Heart left ventricle (tissue), 16 donors: ENCODE measurements at regions of chr4 and their contacts with region 1.

Region 1: GRCh38 chr4:183840311-183840710 is 64.8 kb upstream of the STOX2 start:
- DNase-seq: peak; percentile 81 to 84 (median 82)
- ATAC-seq: peak; percentile 27 to 84 (median 68)
- H3K4me3 ChIP-seq: no peak overlapping the region
- H3K27ac ChIP-seq: no peak overlapping the region
- H3K4me1 ChIP-seq: peaks cover 0 to 21% (median 5%) of the 10 kb centered on the region in 12 donors
- H3K27me3 ChIP-seq: no peaks in the 10 kb centered on the region
- CTCF ChIP-seq: peak; percentile 83 to 93 (median 88)
- POLR2A ChIP-seq: no peak

Region 2: DNA sequence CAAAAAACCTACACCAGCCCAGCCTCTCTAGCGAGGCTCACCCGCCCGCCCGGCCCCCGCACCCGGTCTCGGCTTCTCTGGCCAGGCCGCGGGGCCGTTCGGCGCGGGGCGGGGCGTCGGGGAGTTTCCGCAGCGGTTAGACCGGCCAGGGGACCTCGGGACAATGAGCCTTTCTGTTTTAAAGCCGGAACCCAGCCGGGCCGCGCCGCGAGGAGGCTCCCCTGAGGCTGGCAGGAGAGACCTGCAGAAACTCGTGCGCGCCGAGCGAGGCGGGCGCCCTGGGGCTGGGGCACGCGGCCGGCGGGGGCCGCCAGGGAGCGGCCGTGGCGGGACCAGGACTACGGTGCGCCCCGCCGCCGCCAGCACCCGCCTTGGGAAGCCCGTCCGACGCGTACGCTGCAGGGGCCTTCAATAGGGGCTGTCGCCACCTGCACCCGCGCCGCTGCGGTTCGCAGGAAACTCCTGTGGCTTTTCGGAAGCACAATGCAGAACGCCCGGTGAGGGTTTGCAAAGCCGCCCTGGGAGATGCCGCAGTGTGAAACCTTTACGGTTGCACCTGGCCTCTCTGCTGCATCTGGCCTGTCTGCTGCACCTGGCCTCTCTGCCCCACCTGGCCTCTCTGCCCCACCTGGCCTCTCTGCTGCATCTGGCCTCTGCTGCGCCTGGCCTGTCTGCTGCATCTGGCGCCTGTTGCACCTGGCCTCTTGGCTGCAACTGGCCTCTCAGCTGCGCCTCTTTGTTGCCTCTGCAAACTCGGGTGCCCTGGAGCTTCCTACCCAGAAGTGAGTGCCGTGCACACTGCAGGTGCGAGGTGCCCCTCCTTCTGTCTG is 117.4 kb before region 1 on chr4:
- intact Hi-C with region 1: loop called in 1 of 10 experiments (anchors 5 kb)
- DNase-seq: peak; percentile 61 to 86 (median 72)
- ATAC-seq: peak; percentile 24 to 78 (median 75)
- H3K4me3 ChIP-seq: peak overlapping the region; percentile 32 to 70 (median 58)
- H3K27ac ChIP-seq: peak overlapping the region in 11 of 12 donors; percentile 3 to 74 (median 44)
- H3K4me1 ChIP-seq: peaks cover 0 to 18% (median 1%) of the 10 kb centered on the region in 12 donors
- H3K27me3 ChIP-seq: no peaks in the 10 kb centered on the region
- CTCF ChIP-seq: peak in 4 of 12 donors; percentile 7 to 31 (median 13)
- POLR2A ChIP-seq: no peak

Region 3: DNA sequence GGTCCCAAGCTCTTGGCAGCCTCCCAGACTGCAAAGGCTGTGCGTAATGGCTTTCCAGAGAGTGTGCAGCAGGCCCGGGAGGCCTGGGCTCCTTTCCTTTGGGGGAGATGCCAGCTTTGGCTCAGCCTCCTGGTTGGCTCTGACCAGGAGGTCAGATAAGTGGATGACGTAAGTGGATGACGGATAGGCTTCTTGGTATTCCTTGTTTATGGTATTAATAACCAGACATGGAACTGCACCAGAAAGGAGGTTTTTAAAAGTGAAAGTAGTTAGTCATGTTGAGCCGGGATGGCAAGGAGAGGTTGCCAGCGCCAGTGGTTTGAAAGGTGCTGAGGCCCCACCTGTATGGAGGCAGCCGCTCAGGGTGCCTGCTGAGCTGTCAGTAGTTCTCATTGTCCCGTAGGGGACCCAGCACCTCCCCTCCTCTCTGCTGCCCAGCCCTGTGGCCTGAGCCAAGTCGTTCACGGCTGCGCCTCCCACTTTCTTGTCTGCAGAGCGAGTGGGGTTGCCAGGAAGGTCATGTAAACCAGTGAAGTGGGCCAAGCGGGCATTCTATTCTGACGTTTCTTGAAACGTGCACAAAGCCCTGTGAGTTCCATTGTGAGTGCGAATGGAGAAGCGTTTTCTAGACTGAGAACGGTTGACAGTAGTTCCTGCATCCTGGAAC is 36.1 kb after region 1 on chr4:
- intact Hi-C with region 1: loop called in 2 of 10 experiments (anchors 1 to 2 kb)
- DNase-seq: peak; percentile 86 to 96 (median 89)
- ATAC-seq: peak; percentile 94 to 96 (median 94)
- H3K4me3 ChIP-seq: peak overlapping the region in 11 of 12 donors; percentile 14 to 65 (median 47)
- H3K27ac ChIP-seq: peak overlapping the region; percentile 68 to 95 (median 85)
- H3K4me1 ChIP-seq: peaks cover 0 to 29% (median 13%) of the 10 kb centered on the region in 12 donors
- H3K27me3 ChIP-seq: no peaks in the 10 kb centered on the region
- CTCF ChIP-seq: no peak
- POLR2A ChIP-seq: peak in 1 of 2 donors; percentile 19

Region 4: DNA sequence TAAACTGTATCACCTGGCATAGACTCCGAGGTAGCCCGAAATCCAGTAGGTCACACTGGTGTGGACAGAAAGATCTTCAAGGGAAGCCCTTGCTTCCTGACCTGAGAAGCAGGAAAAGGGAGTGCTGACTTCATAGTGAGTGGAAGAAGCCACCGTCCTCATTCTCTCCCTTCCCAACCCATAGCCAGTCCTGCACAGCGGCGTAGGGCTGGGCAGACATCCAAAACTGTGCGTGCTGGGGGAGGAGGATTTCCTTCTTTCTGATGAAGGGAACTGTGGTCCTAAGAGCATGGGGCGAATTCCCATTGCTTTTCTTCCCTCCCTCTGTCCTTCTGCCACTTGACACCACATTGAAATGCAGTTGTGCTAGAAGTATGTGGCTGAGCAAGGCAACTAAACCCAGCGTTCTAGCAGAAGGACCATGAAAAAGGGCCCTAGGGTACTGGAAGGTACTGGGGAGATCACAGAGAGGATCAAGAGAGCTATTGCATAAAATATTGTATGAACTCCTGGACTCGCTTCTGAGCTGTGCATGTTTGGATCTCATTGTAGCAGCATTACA is 131.7 kb after region 1 on chr4:
- intact Hi-C with region 1: no loop called
- DNase-seq: peak; percentile 56 to 75 (median 64)
- ATAC-seq: peak; percentile 68 to 89 (median 87)
- H3K4me3 ChIP-seq: peak overlapping the region in 2 of 12 donors; percentile 5 to 17
- H3K27ac ChIP-seq: peak overlapping the region in 2 of 12 donors; percentile 9 to 42
- H3K4me1 ChIP-seq: peaks cover 0 to 23% (median 14%) of the 10 kb centered on the region in 12 donors
- H3K27me3 ChIP-seq: no peaks in the 10 kb centered on the region
- CTCF ChIP-seq: no peak
- POLR2A ChIP-seq: no peak

Region 5: GRCh38 chr4:183987987-183988392 is 147.7 kb after region 1 on chr4:
- intact Hi-C with region 1: loop called in 7 of 10 experiments (anchors 2 to 10 kb)
- DNase-seq: peak; percentile 67 to 88 (median 82)
- ATAC-seq: peak; percentile 90 to 94 (median 92)
- H3K4me3 ChIP-seq: peak overlapping the region; percentile 12 to 56 (median 48)
- H3K27ac ChIP-seq: peak overlapping the region; percentile 63 to 94 (median 86)
- H3K4me1 ChIP-seq: peaks cover 0 to 72% (median 22%) of the 10 kb centered on the region in 12 donors
- H3K27me3 ChIP-seq: no peaks in the 10 kb centered on the region
- CTCF ChIP-seq: no peak
- POLR2A ChIP-seq: peak in 1 of 2 donors; percentile 73

Region 6: DNA sequence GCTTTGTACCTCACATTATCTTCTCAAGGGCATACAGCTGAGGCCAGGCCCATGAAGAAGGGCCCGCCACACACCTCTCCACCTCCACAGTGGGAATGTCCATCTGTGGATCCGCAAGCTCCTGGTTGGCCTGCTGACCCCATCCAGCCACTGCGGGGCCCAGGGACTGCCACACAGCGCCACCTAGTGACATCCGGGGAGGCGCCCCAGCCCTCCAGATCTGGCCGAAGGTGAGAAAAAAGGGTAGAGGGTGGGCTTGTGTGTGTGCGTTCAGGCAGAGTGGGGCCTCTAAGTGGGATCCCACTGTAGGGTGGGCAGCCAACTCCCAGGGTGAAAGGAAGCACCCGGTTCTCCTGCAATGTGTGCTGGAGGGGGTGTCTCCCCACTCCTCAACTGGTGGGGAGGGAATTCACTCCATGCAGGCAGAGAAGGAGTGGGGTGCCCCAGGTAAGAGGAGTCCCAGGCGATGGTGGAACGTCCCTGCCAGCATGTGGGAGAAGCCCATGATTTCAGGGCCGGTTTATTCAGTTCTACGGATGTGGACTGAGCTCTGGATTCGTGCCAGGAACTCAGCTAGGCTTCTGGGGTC is 260.1 kb after region 1 on chr4:
- intact Hi-C with region 1: loop called (anchors 1 to 5 kb)
- DNase-seq: peak; percentile 26 to 85 (median 46)
- ATAC-seq: peak; percentile 57 to 80 (median 70)
- H3K4me3 ChIP-seq: no peak overlapping the region
- H3K27ac ChIP-seq: no peak overlapping the region
- H3K4me1 ChIP-seq: peaks cover 0 to 35% (median 12%) of the 10 kb centered on the region in 12 donors
- H3K27me3 ChIP-seq: no peaks in the 10 kb centered on the region
- CTCF ChIP-seq: peak in 11 of 12 donors; percentile 53 to 91 (median 65)
- POLR2A ChIP-seq: no peak

Region 7: DNA sequence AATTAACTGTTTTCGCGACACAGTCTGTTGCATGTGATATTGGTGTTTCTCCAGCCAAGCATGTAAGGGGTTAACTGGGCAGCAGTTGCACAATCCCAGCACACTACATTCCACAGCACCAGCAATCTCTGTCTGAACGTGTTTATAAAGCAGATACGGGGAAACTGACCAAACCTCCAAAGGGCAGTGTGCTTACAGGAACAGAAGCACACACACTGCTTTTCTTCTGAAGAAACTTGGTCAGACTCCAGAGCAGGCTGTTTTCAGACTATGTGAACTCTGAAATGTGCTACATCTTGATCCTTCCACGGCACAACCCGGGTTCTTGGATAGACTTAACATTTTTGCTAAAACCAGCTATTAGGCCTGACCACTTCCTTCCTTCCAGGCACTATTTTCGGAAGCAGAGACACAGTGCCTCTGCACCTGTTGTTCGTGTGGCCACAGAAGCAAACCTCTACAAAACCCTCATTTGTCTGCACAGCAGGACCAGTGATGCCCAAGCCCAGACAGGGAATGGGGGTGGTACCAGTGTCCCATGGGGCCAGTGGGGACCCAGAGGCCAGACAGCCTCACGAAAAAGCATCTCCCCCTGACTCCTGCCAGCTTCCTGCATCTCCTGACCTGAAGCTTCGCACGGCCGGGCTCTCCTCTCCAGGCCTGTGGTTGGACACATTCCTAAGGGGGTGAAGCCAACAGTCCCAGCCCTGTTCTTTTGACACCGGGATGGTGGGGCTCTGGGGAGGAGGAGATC is 543.9 kb after region 1 on chr4:
- intact Hi-C with region 1: no loop called
- DNase-seq: peak in 1 of 5 donors; percentile 31
- ATAC-seq: peak; percentile 5 to 72 (median 34)
- H3K4me3 ChIP-seq: peak overlapping the region in 9 of 12 donors; percentile 5 to 42 (median 28)
- H3K27ac ChIP-seq: peak overlapping the region; percentile 60 to 96 (median 90)
- H3K4me1 ChIP-seq: peaks cover 18 to 78% (median 64%) of the 10 kb centered on the region in 12 donors
- H3K27me3 ChIP-seq: no peaks in the 10 kb centered on the region
- CTCF ChIP-seq: no peak
- POLR2A ChIP-seq: peak in 1 of 2 donors; percentile 6